ENCODE measurements at regions of chr7 and their contacts with region 1.

Region 1: GRCh38 chr7:73522105-73522872 is at the start of gene BAZ1B:
- DNase-seq: peak; percentile 98
- H3K4me3 ChIP-seq: peak within 1 kb of the TSS; percentile 81 to 91 (median 87)
- H3K27ac ChIP-seq: peak within 1 kb of the TSS; percentile 91 to 97 (median 97)
- H3K4me1 ChIP-seq: peaks cover 10 to 51% (median 30%) of the 10 kb centered on the region in 4 donors
- H3K27me3 ChIP-seq: no peaks in the 10 kb centered on the region
- CTCF ChIP-seq: peak in 4 of 5 experiments; percentile 17 to 56 (median 30)
- EP300 ChIP-seq: no peak
- POLR2A ChIP-seq: peak; percentile 60
- total RNA-seq, gene BAZ1B: 28.7 to 48.0 (median 33.7) TPM

Region 2: DNA sequence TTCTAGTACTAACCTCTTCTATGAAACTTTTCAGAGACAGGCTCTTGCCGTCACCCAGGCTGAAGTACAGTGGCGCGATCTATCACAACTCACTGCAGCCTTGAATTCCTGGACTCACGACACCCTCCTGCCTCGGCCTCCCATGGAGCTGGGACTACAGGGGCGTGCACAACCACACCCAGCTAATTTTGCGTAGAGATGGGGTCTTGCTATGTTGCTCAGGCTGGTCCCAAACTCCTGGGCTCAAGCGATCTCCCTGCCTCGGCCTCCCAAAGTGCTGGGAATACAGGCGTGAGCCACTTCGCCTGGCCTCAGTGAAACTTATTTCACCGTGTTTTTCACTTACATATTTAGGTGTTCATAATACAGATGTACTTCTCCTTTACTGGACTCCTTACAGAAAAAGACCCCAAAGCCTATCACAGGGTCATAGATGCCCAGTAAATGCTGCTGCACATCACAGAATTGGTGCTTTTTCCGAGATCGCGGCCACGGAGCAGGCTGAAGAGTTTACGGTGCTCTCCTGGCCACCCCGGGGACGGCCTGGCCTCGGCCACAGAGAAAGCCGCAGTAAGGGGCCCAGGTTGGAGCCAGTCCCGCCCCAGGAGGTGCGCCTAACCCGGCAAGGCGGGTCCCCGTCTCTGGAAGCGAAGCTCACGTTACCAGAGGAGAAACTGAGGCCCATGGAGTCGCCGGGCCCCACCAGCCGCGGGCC is 55.5 kb after region 1 on chr7:
- in situ Hi-C with region 1: no loop called
- intact Hi-C with region 1: loop called (anchors 2 kb)
- DNase-seq: peak; percentile 21
- H3K4me3 ChIP-seq: peak overlapping the region; percentile 83 to 95 (median 92)
- H3K27ac ChIP-seq: peak overlapping the region; percentile 94 to 98 (median 97)
- H3K4me1 ChIP-seq: peaks cover 11 to 27% (median 19%) of the 10 kb centered on the region in 4 donors
- H3K27me3 ChIP-seq: no peaks in the 10 kb centered on the region
- CTCF ChIP-seq: no peak
- EP300 ChIP-seq: no peak
- POLR2A ChIP-seq: no peak

Measured in transverse colon (tissue), 4 donors.